BJ (cell line): ENCODE measurements at regions of chr16 and their contacts with region 1.

Region 1: GRCh38 chr16:9033125-9033830 is 58.2 kb upstream of the HAPSTR1 start:
- DNase-seq: no peak
- H3K4me3 ChIP-seq: no peak overlapping the region
- H3K27me3 ChIP-seq: no peaks in the 10 kb centered on the region
- CTCF ChIP-seq: peak; percentile 83

Region 2: GRCh38 chr16:9047686-9048301 is 14.5 kb after region 1 on chr16:
- CTCF ChIA-PET with region 1: interaction called, 19 read pairs
- POLR2A ChIA-PET with region 1: no interaction called
- DNase-seq: peak; percentile 97
- H3K4me3 ChIP-seq: no peak overlapping the region
- H3K27me3 ChIP-seq: no peaks in the 10 kb centered on the region
- CTCF ChIP-seq: no peak

Region 3: DNA sequence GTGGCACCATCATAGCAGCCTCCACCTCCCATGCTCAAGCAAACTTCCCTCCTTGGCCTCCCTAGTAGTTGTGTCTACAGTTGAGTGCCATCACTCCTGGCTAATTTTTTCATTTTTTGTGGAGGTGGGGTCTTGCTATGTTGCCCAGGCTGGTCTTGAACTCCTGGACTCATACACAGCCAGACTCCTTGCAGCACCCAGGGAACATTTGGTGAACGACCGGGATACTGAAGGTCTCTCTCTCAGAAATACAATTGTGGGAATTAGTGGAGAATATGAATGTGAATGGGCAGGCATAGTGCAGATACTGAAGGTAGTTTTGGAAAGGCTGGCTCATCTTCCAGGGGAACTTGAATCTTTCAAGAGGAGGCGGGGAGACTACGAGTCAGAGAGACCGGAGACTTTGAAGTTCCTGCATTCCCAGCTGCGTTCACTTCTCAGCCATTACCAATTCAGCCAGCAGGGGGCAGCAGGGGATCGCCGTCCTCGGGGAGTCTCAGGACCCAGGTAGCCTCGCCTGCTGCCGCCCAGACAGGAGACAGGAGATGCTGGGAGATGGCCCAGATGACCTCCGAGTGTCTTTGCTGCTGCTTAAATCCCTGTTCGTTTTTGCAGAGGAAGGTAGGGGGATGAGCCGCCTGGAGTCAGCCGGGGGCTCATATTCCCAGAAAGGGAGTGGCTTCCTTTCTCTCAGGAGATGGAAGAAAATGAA is 126.7 kb after region 1 on chr16:
- CTCF ChIA-PET with region 1: no interaction called
- POLR2A ChIA-PET with region 1: no interaction called
- DNase-seq: no peak
- H3K4me3 ChIP-seq: no peak overlapping the region
- H3K27me3 ChIP-seq: no peaks in the 10 kb centered on the region
- CTCF ChIP-seq: peak; percentile 76